Activated CD4-positive, alpha-beta T cell treated with anti-CD3 and anti-CD28 coated beads for 36 hours (primary cell): ENCODE measurements at regions of chr2 and their contacts with region 1.

Region 1: GRCh38 chr2:8191427-8191826 is 490.4 kb upstream of the ID2 start:
- DNase-seq: no peak
- ATAC-seq: no peak
- H3K4me3 Mint-ChIP-seq: no peak overlapping the region
- H3K27ac Mint-ChIP-seq: no peak overlapping the region
- H3K4me1 Mint-ChIP-seq: no peaks in the 10 kb centered on the region
- H3K27me3 Mint-ChIP-seq: no peaks in the 10 kb centered on the region

Region 2: DNA sequence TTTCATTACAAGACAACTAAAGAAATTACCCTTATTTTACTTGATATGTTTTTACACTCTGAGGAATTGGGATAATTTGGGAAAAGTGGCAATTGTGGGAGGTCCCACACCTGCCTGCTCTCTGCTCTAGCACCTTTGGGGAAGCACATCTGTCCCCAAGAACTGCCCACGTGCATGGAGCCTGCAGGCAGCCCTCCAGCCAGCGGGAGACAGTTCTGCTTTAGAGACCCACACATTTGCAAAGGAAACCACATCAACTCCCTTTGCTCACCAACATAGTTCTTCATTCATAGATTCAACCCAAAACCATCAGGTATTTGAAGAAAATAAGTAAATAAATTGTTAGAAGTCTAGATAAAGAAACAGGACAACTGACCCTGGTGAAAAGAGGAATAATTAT is 250.6 kb after region 1 on chr2:
- CTCF ChIA-PET with region 1: no interaction called
- POLR2A ChIA-PET with region 1: interaction called, 10 read pairs
- intact Hi-C with region 1: no loop called
- DNase-seq: no peak
- ATAC-seq: no peak
- H3K4me3 Mint-ChIP-seq: no peak overlapping the region
- H3K27ac Mint-ChIP-seq: no peak overlapping the region
- H3K4me1 Mint-ChIP-seq: peaks cover 6% of the 10 kb centered on the region
- H3K27me3 Mint-ChIP-seq: peaks cover 2% of the 10 kb centered on the region